Activated naive CD8-positive, alpha-beta T cell treated with anti-CD3 and anti-CD28 coated beads, Interleukin-2, amount 10 ng/mL, durations not matched to agents 7 days and 5 days (primary cell): ENCODE measurements at regions of chr9 and their contacts with region 1.

Region 1: DNA sequence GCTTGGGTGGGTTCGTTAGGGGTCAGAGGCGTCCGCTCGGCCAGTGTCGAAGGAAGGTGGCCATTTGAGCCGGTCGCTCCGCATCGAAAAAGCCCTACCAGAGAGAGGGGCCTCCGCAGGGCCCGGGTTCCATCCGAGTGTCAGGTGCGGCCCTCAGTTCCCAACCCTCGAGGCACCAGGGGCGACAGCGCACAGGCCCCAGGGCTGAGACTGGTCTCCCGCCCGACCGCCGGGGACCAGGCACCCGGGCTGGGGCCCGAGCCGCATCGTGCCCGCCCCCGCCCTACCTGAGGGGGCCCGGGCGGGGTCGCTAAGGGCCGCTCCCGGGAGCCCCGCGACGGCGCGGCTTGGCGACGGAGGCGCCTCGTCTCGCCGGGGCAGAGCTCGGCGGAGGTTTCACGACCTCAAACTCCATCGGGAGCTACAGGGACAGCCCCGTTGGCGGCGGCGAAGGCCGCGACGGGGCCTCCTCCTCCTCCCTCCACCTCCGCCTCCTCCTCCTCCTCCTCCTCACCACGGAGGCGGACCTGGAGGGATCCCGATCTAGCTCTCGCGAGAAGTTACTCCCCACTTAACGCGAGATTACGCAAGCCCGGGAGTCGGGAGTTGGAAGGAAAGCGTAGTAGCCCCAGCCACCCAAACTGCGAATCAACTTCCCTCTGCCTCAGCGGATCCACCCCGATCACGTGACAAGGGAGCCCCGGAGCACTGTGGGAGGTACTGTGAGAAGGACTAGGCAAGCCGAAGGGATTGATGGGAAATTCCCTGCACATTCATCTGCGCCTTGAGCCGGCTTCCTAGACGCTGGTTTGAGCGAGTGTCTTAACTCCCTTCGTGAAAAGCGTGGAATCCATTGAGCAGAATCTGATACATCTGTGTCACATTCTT is at the start of gene RC3H2:
- DNase-seq: peak; percentile 91
- ATAC-seq: peak; percentile 87
- H3K4me3 Mint-ChIP-seq: peak within 1 kb of the TSS; percentile 95
- H3K27ac Mint-ChIP-seq: peak within 1 kb of the TSS; percentile 91
- H3K4me1 Mint-ChIP-seq: peaks cover 12% of the 10 kb centered on the region
- H3K27me3 Mint-ChIP-seq: no peaks in the 10 kb centered on the region
- total RNA-seq, gene RC3H2: 52.6 to 55.0 TPM

Region 2: DNA sequence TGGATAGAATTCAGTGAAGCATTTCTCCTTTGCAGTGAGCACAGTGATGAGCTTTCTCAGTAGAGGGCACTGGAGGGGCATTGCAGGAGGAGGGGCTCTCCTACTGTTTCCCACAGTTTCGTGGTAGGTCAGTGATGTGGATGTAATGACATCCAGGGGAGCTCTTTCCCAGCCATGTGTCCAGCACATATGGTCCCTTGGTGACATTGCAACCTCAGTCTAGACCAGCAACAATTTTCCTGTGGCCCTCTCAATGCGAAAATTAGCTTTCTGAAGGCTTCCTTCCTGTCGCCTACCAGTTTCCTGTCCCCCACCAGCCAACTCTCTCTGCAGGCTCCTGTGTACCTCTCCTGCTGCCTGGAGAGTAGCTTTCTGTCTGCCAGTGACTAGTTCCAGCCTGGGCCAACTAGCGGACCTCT is 69.7 kb before region 1 on chr9:
- POLR2A ChIA-PET with region 1: interaction called, 25 read pairs
- DNase-seq: peak; percentile 50
- ATAC-seq: peak; percentile 89
- H3K4me3 Mint-ChIP-seq: peak overlapping the region; percentile 74
- H3K27ac Mint-ChIP-seq: peak overlapping the region; percentile 93
- H3K4me1 Mint-ChIP-seq: peaks cover 22% of the 10 kb centered on the region
- H3K27me3 Mint-ChIP-seq: no peaks in the 10 kb centered on the region

Region 3: GRCh38 chr9:122931226-122932121 is 26.4 kb after region 1 on chr9 and contains the start of gene ZBTB26:
- POLR2A ChIA-PET with region 1: interaction called, 23 read pairs
- DNase-seq: peak; percentile 85
- ATAC-seq: peak; percentile 98
- H3K4me3 Mint-ChIP-seq: no peak within 1 kb of the TSS
- H3K27ac Mint-ChIP-seq: peak within 1 kb of the TSS; percentile 85
- H3K4me1 Mint-ChIP-seq: peaks cover 13% of the 10 kb centered on the region
- H3K27me3 Mint-ChIP-seq: no peaks in the 10 kb centered on the region
- total RNA-seq, gene ZBTB26: 8.3 to 11.2 TPM

Region 4: DNA sequence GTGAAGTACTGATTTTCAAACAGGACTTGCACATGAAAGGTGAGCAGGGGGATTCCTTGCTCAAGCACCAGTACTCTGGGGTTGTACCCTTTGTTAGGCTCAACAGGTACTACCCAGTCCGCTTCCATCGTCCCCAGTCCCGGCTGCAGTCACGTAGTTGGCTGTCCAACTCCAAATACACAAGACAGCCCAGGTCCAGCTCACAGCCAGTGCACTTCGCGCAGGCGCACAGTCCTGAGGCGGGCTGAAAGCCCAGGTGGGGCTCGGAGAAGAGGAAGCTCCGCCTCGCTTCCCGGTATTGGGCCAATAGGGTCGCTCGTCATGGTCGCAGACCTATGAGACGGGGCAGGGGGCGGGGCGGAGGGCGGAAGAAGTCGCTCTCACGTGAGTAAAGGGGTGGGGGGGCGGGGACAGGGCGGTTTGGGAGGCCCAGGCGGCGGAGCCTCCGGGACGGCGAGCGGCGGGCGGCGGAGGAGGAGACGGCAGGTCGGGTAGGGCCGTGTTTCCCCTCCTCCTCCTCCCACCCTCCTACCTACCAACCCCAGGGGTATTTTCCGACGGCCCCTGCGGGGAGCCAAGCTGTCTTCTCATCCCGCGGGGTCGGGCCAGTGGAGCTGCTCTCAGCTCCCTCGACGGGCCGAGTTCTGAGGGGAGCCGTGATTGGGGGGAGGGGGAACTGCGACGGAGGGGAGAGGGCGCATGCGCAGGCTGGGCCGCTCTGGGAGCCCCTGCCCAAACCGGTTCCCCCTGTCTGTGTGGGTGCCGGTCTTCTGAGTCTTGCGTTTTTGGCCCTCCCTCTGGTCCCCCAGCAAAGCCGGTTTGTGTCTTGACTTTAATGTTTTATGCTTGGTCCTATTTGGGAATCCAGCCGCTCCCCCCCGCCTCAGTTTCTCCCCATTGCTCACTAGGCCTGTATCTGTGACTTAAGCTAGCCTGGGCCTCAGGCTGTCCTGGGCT is 35.8 kb after region 1 on chr9 and contains the start of gene RABGAP1:
- POLR2A ChIA-PET with region 1: interaction called, 10 read pairs
- DNase-seq: peak; percentile 94
- ATAC-seq: peak; percentile 100
- H3K4me3 Mint-ChIP-seq: peak within 1 kb of the TSS; percentile 97
- H3K27ac Mint-ChIP-seq: peak within 1 kb of the TSS; percentile 94
- H3K4me1 Mint-ChIP-seq: peaks cover 28% of the 10 kb centered on the region
- H3K27me3 Mint-ChIP-seq: no peaks in the 10 kb centered on the region
- total RNA-seq, gene RABGAP1: 25.5 to 27.7 TPM